Mucosa of descending colon (tissue), 3 donors: ENCODE measurements at regions of chr14 and their contacts with region 1.

Region 1: GRCh38 chr14:54572316-54572715 is 5.4 kb downstream of the SAMD4A start:
- DNase-seq: peak in 1 of 3 donors; percentile 51
- ATAC-seq: no peak
- H3K4me3 ChIP-seq: no peak overlapping the region
- H3K4me1 ChIP-seq: peaks cover 4% of the 10 kb centered on the region
- CTCF ChIP-seq: no peak

Region 2: GRCh38 chr14:54638135-54638446 is 65.8 kb after region 1 on chr14:
- intact Hi-C with region 1: loop called in 1 of 2 experiments (anchors 10 kb)
- DNase-seq: no peak
- ATAC-seq: no peak
- H3K4me3 ChIP-seq: no peak overlapping the region
- H3K4me1 ChIP-seq: no peaks in the 10 kb centered on the region
- CTCF ChIP-seq: no peak